A673 (cell line): ENCODE measurements at regions of chr1 and their contacts with region 1.

Region 1: GRCh38 chr1:20493839-20494608 is 8.0 kb upstream of the CAMK2N1 start:
- DNase-seq: peak; percentile 91
- H3K4me3 ChIP-seq: no peak overlapping the region
- H3K27ac ChIP-seq: no peak overlapping the region
- H3K4me1 ChIP-seq: peaks cover 6% of the 10 kb centered on the region
- H3K27me3 ChIP-seq: peaks cover 8% of the 10 kb centered on the region
- CTCF ChIP-seq: peak; percentile 98

Region 2: GRCh38 chr1:20361806-20362640 is 132.0 kb before region 1 on chr1:
- CTCF ChIA-PET with region 1: no interaction called
- POLR2A ChIA-PET with region 1: no interaction called
- intact Hi-C with region 1: loop called (anchors 1 kb)
- DNase-seq: peak; percentile 52
- H3K4me3 ChIP-seq: no peak overlapping the region
- H3K27ac ChIP-seq: no peak overlapping the region
- H3K4me1 ChIP-seq: peaks cover 4% of the 10 kb centered on the region
- H3K27me3 ChIP-seq: peaks cover 75% of the 10 kb centered on the region
- CTCF ChIP-seq: peak; percentile 85

Region 3: GRCh38 chr1:20376880-20377494 is 117.0 kb before region 1 on chr1:
- CTCF ChIA-PET with region 1: no interaction called
- POLR2A ChIA-PET with region 1: no interaction called
- intact Hi-C with region 1: loop called (anchors 5 kb)
- DNase-seq: peak; percentile 45
- H3K4me3 ChIP-seq: no peak overlapping the region
- H3K27ac ChIP-seq: no peak overlapping the region
- H3K4me1 ChIP-seq: no peaks in the 10 kb centered on the region
- H3K27me3 ChIP-seq: peaks cover 49% of the 10 kb centered on the region
- CTCF ChIP-seq: peak; percentile 81

Region 4: GRCh38 chr1:20540281-20540680 is 46.3 kb after region 1 on chr1:
- CTCF ChIA-PET with region 1: no interaction called
- POLR2A ChIA-PET with region 1: no interaction called
- intact Hi-C with region 1: no loop called
- DNase-seq: no peak
- H3K4me3 ChIP-seq: no peak overlapping the region
- H3K27ac ChIP-seq: no peak overlapping the region
- H3K4me1 ChIP-seq: no peaks in the 10 kb centered on the region
- H3K27me3 ChIP-seq: peaks cover 37% of the 10 kb centered on the region
- CTCF ChIP-seq: no peak